Common myeloid progenitor, CD34-positive (primary cell): ENCODE measurements at regions of chr5 and their contacts with region 1.

Region 1: DNA sequence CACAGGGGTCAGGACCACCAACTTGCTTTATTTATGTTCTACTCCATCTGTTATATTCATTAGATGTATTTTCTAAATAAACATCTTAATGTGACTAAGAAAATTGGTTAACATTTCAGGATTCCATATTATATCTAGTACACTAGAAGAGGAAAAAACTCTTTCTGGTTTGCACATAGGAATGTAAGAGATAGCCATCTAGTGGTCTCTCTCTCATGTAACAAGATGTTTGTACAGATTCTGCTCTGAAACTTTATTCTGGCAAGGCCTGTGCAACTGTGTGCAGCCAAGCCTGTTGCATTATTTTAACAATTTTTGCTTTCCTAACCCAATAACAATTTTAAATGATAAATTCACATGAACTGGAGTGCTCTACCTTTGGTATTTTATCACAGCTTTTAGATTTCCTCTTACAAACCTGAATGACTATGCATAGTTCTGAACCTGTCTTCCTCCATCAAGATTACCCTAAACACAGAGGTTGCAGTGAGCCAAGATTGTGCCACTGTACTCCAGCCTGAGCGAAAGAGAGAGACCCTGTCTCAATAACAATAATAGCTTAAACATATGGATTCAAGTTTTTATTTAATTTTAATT is 148.1 kb downstream of the GIN1 start:
- DNase-seq: peak; percentile 9 to 51 (median 40)
- H3K4me3 ChIP-seq: no peak overlapping the region
- H3K27ac ChIP-seq: no peak overlapping the region
- H3K4me1 ChIP-seq: peaks cover 0 to 5% (median 2%) of the 10 kb centered on the region in 4 experiments
- H3K27me3 ChIP-seq: no peaks in the 10 kb centered on the region

Region 2: GRCh38 chr5:102681407-102681983 is 290.3 kb before region 1 on chr5:
- CTCF ChIA-PET with region 1: interaction called, 12 read pairs
- POLR2A ChIA-PET with region 1: no interaction called
- DNase-seq: peak; percentile 66 to 76 (median 69)
- H3K4me3 ChIP-seq: no peak overlapping the region
- H3K27ac ChIP-seq: no peak overlapping the region
- H3K4me1 ChIP-seq: peaks cover 0 to 4% (median 0%) of the 10 kb centered on the region in 4 experiments
- H3K27me3 ChIP-seq: no peaks in the 10 kb centered on the region

Region 3: GRCh38 chr5:103532086-103532734 is 560.4 kb after region 1 on chr5:
- CTCF ChIA-PET with region 1: no interaction called
- POLR2A ChIA-PET with region 1: no interaction called
- DNase-seq: no peak
- H3K4me3 ChIP-seq: no peak overlapping the region
- H3K27ac ChIP-seq: no peak overlapping the region
- H3K4me1 ChIP-seq: no peaks in the 10 kb centered on the region
- H3K27me3 ChIP-seq: no peaks in the 10 kb centered on the region